ENCODE measurements at regions of chr7 and their contacts with region 1.

Region 1: DNA sequence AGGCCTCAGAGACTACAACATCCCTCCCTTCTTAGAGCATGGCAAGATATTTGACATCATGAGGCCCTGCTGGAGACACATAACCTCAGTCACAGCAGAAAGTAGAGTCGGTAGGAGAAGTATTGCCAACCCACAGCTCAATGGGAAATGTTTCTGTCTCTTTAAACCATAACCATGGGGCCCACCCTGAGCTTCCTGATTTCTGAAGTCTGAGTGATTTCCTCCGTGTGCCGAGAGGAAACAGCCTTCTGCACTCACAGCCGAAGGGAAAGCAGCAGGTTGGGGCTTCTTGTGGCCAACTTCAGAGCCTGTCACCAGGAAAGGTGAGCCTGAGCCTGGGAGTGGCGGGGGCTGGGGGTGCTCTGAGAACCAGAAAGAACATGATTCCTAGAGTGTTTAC is at the start of gene GIMAP1:
- DNase-seq: peak; percentile 47
- H3K4me3 ChIP-seq: peak within 1 kb of the TSS; percentile 69
- H3K27ac ChIP-seq: peak within 1 kb of the TSS; percentile 91
- H3K4me1 ChIP-seq: peaks cover 24% of the 10 kb centered on the region
- H3K27me3 ChIP-seq: no peaks in the 10 kb centered on the region
- CTCF ChIP-seq: no peak
- total RNA-seq, gene GIMAP1: 5.9 TPM

Region 2: DNA sequence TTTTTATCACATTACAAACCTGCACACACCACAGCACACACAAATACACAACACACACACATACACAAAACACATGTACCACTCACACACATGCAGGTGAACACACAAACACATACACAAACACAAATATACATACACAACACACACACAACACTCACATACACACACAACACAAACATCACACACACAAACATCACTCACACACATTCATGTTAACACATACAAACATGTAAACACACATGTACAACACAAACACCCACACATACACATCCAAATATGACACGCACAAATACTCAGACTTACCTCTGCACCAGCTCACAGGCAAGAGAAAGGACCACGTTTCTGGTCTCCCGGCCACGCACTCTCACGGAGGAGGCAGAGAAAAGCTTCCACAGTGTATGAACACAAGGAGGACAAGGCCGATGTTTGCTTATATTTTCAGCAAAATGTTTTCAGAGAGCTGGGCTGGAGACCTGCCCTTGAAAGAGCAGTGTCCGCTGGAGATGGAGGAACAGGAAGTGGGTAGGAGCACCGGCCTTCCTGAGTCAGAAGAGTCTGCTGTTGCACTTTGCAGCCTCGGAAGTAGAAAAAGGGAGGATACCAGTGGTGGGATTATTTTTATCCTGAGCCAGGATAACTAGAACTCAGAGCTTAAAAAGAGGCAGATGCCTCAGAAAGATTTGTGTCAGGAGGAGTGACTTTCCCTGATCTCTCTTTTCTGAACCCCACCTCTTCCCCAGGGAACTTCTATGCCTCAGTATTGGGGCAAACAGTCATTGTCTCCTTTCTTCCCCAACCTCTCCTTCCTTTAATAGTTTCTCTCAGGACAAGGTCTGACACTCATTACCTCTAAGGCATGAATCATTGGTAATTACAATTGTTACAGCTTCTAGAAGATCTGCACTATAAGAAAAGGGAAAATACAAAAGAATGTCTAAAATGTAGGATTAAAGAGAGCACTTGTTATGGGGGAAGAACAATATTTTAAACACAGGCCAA is 84.2 kb before region 1 on chr7 and contains the start of gene GIMAP6:
- intact Hi-C with region 1: loop called (anchors 10 kb)
- DNase-seq: no peak
- H3K4me3 ChIP-seq: peak within 1 kb of the TSS; percentile 68
- H3K27ac ChIP-seq: peak within 1 kb of the TSS; percentile 94
- H3K4me1 ChIP-seq: peaks cover 61% of the 10 kb centered on the region
- H3K27me3 ChIP-seq: no peaks in the 10 kb centered on the region
- CTCF ChIP-seq: no peak
- total RNA-seq, gene GIMAP6: 24.3 TPM

Region 3: GRCh38 chr7:150852371-150852920 is 136.1 kb after region 1 on chr7 and contains the start of gene AOC1:
- intact Hi-C with region 1: no loop called
- DNase-seq: no peak
- H3K4me3 ChIP-seq: no peak within 1 kb of the TSS
- H3K27ac ChIP-seq: no peak within 1 kb of the TSS
- H3K4me1 ChIP-seq: no peaks in the 10 kb centered on the region
- H3K27me3 ChIP-seq: peaks cover 51% of the 10 kb centered on the region
- CTCF ChIP-seq: no peak
- total RNA-seq, gene AOC1: 0.36 TPM

Region 4: DNA sequence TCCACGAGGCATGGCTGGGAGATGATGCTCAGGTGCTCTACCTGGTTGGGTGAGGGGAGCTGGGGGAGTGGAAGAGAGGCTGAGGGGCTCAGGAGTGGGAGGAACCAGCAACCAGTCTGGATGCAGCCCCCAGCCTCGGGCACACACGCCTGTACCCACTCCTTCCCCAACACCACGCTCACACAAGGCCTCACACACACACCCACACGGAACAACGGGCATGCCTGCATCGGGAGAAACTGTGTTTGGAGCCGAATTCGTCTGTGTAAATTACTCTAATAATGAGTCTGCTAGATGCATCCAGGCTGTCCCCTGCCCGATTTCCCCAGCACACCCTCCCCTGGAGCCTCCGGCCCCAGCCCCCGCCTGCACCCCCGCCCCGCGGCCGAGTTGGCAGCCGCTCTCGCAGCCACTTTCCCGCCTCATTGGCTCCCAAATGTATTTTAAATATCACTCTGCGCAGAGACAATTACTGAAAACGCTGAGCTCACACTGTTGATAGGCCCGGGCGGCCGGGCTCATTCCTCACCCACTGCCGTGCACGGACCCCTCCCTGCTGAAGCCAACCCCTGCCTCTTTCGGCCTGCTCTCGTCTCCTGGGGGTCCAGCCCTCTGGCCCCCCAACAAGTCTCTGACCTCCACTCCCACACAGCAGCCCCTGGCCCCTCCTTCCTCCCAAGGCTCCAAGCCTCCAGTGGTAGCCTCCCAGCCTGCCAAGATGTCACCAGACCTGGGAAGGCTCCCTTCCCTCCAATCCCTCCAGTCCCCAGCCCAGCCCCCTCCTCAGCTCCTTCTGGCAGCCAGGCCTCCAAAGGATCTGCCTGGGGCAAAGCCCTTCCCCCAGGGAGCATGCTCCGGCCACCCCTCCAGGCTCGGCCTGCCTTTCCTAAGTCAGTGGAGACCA is 482.8 kb after region 1 on chr7:
- intact Hi-C with region 1: no loop called
- DNase-seq: no peak
- H3K4me3 ChIP-seq: no peak overlapping the region
- H3K27ac ChIP-seq: no peak overlapping the region
- H3K4me1 ChIP-seq: no peaks in the 10 kb centered on the region
- H3K27me3 ChIP-seq: peaks cover 65% of the 10 kb centered on the region
- CTCF ChIP-seq: no peak